ENCODE measurements at regions of chr17 and their contacts with region 1.

Region 1: DNA sequence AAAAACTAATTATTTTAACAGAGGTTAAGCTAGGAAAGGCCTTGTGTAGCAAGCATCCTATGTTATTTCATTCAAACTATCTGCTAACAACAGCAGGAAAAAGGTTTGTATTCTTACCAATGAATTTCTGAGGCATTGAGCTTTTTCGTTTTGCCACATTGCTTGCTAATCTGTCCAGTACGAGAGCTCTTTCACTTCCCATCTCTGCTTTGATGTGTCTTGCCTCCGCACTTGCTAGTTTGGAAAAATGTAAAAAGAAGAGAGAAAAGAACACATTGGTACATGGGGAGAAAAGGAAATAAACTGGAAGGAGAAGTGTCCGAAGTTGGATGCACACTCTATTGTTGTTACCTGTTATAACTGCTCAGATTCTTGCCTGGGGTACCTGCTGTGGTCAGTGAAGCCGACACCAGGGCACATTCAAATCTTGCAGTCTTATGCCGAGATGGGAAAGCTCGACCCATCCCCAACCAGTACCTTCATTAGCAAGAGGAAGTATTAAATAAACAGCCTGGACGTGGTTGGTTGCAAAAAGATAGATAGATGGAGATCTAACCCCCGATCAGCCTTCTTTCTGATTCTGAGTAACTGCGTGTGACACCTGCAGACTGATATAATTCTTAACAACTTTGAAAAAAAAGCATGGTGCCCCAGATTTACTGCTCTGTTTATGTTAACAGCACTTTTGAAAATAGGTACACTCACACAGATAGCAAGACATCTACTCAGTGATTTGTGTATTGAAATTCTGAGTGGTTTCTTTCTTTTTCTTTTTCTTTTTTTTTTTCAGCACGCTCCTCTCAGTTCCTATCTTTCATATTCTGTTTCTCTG is 40.0 kb downstream of the GRB7 start:
- DNase-seq: no peak
- H3K4me3 Mint-ChIP-seq: no peak overlapping the region
- H3K27ac Mint-ChIP-seq: no peak overlapping the region
- H3K4me1 Mint-ChIP-seq: peaks cover 48% of the 10 kb centered on the region
- H3K27me3 Mint-ChIP-seq: no peaks in the 10 kb centered on the region
- CTCF ChIP-seq: no peak

Region 2: GRCh38 chr17:39668199-39668966 is 109.4 kb before region 1 on chr17 and contains the start of gene PNMT:
- CTCF ChIA-PET with region 1: interaction called, 34,714 read pairs
- intact Hi-C with region 1: loop called (anchors 1 kb)
- DNase-seq: peak; percentile 100
- H3K4me3 Mint-ChIP-seq: peak within 1 kb of the TSS; percentile 24
- H3K27ac Mint-ChIP-seq: peak within 1 kb of the TSS; percentile 0
- H3K4me1 Mint-ChIP-seq: peaks cover 65% of the 10 kb centered on the region
- H3K27me3 Mint-ChIP-seq: peaks cover 69% of the 10 kb centered on the region
- CTCF ChIP-seq: no peak
- total RNA-seq, gene PNMT: 1.3 and 3.2 TPM in 2 replicates

Region 3: DNA sequence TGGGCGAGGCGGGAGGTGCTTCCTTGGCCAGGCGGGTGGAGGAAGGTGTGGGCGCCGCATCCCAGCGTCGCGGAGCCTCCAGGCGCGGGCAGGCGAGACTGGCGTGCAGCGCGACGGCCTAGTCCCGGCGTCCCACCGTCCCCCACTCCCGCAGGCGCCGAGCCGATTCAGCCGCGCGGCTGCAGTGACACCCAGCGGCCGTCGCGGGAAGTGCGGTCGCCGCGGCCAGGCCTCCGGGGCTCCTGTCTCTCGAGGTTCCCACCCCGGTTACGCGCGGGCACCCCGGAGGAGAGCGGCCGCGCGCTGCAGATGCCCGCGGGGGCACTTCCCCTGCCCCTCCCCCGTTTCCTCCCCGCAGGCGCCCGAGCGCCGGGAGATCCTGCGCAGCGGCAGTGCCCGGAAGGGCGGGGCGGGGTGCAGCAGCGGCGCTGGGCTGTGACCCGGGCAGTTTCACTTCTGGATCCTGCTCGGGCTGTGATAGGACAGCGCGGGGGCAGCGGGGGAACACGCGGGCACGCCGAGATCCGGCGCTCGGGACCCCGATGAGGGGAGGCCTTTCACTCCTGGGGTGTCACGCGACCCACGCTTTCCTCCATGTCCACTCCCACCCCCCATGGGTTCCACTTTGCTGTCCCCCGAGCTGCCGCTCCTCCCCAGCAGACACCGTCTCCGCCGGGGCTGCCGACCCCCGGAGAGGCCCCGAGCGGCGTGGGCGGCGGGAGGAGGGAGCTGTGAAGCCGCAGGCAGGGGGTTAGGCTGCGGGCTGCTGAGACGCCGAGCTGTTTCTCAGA is 23.4 kb before region 1 on chr17:
- CTCF ChIA-PET with region 1: interaction called, 34,714 read pairs
- intact Hi-C with region 1: loop called (anchors 1 kb)
- DNase-seq: peak; percentile 100
- H3K4me3 Mint-ChIP-seq: peak overlapping the region; percentile 63
- H3K27ac Mint-ChIP-seq: peak overlapping the region; percentile 12
- H3K4me1 Mint-ChIP-seq: peaks cover 58% of the 10 kb centered on the region
- H3K27me3 Mint-ChIP-seq: peaks cover 35% of the 10 kb centered on the region
- CTCF ChIP-seq: no peak

Region 4: DNA sequence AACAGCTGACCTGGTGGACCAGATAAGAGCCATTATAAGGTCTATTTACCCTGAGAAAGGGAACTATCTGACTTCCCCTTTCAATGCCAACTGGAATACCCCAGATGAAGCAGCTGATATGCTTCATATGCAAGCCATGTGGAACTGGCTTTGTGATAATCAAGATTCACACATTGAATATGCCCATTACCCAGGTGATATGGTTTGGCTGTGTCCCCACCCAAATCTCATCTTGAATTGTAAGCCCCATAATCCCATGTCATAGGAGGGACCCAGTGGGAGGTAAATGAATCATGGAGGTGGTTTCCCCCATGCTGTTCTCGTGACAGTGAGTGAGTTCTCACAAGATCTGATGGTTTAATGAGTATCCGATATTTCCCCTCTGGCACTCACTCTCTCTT is 44.3 kb after region 1 on chr17:
- CTCF ChIA-PET with region 1: interaction called, 920 read pairs
- intact Hi-C with region 1: loop called (anchors 1 kb)
- DNase-seq: peak; percentile 59
- H3K4me3 Mint-ChIP-seq: no peak overlapping the region
- H3K27ac Mint-ChIP-seq: no peak overlapping the region
- H3K4me1 Mint-ChIP-seq: peaks cover 9% of the 10 kb centered on the region
- H3K27me3 Mint-ChIP-seq: no peaks in the 10 kb centered on the region
- CTCF ChIP-seq: no peak

Region 5: GRCh38 chr17:39903158-39903884 is 125.6 kb after region 1 on chr17:
- CTCF ChIA-PET with region 1: interaction called, 1,212 read pairs
- intact Hi-C with region 1: loop called (anchors 1 kb)
- DNase-seq: peak; percentile 66
- H3K4me3 Mint-ChIP-seq: no peak overlapping the region
- H3K27ac Mint-ChIP-seq: no peak overlapping the region
- H3K4me1 Mint-ChIP-seq: peaks cover 12% of the 10 kb centered on the region
- H3K27me3 Mint-ChIP-seq: no peaks in the 10 kb centered on the region
- CTCF ChIP-seq: no peak

Region 6: DNA sequence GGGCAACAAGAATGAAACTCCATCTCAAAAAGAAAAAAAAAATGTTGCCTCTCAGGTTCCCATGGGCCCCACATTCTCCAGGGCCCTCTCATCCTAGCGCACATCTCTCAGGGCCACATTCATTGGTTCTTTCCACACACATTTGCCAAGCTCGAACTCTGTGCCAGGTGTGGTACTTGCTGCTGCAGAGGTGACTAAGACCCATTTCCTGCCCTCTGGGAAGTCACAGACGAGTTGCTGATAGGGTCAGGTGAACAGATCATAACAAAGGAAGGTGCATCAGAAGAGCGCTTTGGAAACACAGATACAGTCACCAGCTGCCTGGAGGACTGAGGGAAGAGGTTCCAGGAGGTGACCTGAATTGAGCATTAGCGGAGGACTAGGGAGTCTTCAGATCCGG is 186.1 kb after region 1 on chr17:
- CTCF ChIA-PET with region 1: interaction called, 978 read pairs
- intact Hi-C with region 1: loop called (anchors 1 kb)
- DNase-seq: peak; percentile 94
- H3K4me3 Mint-ChIP-seq: no peak overlapping the region
- H3K27ac Mint-ChIP-seq: peak overlapping the region; percentile 0
- H3K4me1 Mint-ChIP-seq: peaks cover 45% of the 10 kb centered on the region
- H3K27me3 Mint-ChIP-seq: peaks cover 32% of the 10 kb centered on the region
- CTCF ChIP-seq: no peak

Measured in Calu3 (cell line).